ENCODE measurements at regions of chr19 and their contacts with region 1.

Region 1: GRCh38 chr19:49473868-49474544 is at the start of gene FLT3LG:
- DNase-seq: peak; percentile 89
- H3K4me3 Mint-ChIP-seq: peak within 1 kb of the TSS; percentile 88
- H3K27ac Mint-ChIP-seq: peak within 1 kb of the TSS; percentile 95
- H3K4me1 Mint-ChIP-seq: peaks cover 65% of the 10 kb centered on the region
- H3K27me3 Mint-ChIP-seq: no peaks in the 10 kb centered on the region
- total RNA-seq, gene FLT3LG: 23.9 to 28.4 TPM

Region 2: DNA sequence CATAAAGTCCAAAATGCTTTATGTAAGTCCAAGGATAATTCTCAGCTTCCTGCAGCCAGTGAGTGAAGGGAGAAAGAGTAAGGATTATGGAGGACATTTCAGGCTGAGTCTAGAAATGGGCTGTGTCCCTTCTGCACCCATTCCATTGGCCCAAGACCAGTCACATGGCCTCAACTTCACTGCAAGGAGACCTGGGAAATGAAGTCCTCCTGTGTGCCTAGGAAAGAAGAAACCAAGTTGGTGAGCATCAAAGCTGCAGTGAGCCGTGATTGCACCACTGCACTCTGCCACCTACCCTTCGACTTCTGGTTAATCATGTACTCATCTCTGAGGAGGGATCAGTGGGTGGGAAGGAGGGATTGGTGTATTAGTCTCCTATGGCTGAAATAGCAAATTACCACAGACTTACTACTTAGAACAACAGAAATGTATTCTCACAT is 142.4 kb before region 1 on chr19:
- CTCF ChIA-PET with region 1: interaction called, 4 read pairs
- intact Hi-C with region 1: loop called (anchors 2 kb)
- DNase-seq: peak; percentile 84
- H3K4me3 Mint-ChIP-seq: peak overlapping the region; percentile 44
- H3K27ac Mint-ChIP-seq: peak overlapping the region; percentile 81
- H3K4me1 Mint-ChIP-seq: peaks cover 74% of the 10 kb centered on the region
- H3K27me3 Mint-ChIP-seq: no peaks in the 10 kb centered on the region

Region 3: DNA sequence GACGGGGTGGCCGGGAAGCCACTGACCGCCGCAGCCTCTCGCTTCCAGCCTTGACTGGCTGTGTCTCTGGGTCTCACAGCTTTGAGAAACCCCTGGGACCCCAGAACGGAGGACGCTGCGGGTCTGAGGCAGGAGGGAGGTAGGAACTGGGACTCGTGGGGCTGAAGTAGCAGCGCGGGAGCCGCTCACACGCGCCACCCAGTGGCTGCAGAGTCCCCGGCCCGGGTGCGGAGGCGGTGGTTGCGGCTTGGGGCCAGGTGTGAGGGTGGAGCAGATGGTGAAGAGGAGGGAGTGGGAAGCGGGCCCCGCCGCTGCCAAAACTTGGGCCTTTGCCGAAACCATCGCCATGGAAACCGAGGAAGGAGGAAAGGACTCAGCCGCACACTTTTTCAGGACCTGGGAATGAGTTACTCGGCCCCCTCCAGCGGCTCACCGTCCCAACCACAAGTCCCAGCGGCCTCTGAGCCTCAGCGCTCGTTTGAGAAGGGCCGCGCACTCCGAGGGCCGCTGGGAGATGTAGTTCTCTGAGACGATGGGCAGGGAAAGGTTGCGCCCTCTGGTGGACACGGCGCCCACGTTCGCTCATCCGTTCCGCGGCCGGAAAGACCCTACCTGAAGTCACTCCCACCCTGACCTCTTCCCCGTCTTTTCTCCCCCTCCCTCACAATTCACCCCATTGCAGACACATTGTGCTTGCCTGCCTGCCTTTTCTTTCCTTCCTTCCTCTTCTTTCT is 30.5 kb before region 1 on chr19:
- CTCF ChIA-PET with region 1: interaction called, 6 read pairs
- intact Hi-C with region 1: loop called (anchors 1 kb)
- DNase-seq: peak; percentile 96
- H3K4me3 Mint-ChIP-seq: peak overlapping the region; percentile 75
- H3K27ac Mint-ChIP-seq: peak overlapping the region; percentile 72
- H3K4me1 Mint-ChIP-seq: peaks cover 23% of the 10 kb centered on the region
- H3K27me3 Mint-ChIP-seq: peaks cover 38% of the 10 kb centered on the region

Region 4: GRCh38 chr19:49487277-49488045 is 13.5 kb after region 1 on chr19 and contains the start of gene RPL13A:
- CTCF ChIA-PET with region 1: interaction called, 10 read pairs
- intact Hi-C with region 1: loop called (anchors 1 kb)
- DNase-seq: peak; percentile 100
- H3K4me3 Mint-ChIP-seq: peak within 1 kb of the TSS; percentile 99
- H3K27ac Mint-ChIP-seq: peak within 1 kb of the TSS; percentile 95
- H3K4me1 Mint-ChIP-seq: peaks cover 28% of the 10 kb centered on the region
- H3K27me3 Mint-ChIP-seq: no peaks in the 10 kb centered on the region
- total RNA-seq, gene RPL13A: 4,441 to 4,607 TPM

Region 5: DNA sequence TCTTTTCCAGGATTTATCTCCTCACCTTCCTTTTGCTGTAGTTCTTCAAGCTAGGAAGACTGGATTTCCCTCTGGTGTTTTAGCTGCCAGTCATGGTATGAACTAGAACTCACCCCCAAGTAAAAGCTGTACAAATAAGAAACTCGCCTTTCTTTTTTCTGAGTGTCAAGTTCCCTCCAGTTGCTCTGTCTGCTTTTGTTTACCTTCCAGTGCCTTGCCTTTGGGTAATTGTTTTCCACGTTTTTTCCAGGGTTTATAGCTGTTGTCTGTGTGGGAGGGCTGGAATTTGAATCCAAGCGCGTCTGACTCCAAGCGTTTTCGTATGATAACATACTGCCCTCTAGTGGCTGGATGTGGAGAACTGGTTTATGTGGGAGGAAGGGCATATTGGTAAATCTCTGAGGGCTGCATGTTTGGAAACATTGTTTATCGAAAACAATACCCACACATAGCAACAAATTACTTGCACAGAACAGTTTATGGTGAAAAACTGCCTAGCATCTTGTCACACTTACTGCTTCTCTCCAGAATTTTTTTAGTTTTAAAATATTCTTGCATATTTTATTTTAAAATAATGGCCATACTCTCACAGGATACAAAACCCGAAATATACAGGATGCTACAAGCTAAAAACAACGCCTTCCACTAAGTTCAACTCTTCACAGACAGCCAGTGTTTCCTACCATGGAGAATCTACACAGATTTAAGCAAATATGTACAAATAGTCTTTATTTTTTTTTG is 73.0 kb after region 1 on chr19:
- CTCF ChIA-PET with region 1: interaction called, 10 read pairs
- intact Hi-C with region 1: loop called (anchors 2 kb)
- DNase-seq: peak; percentile 82
- H3K4me3 Mint-ChIP-seq: peak overlapping the region; percentile 68
- H3K27ac Mint-ChIP-seq: no peak overlapping the region
- H3K4me1 Mint-ChIP-seq: peaks cover 44% of the 10 kb centered on the region
- H3K27me3 Mint-ChIP-seq: no peaks in the 10 kb centered on the region

Region 6: GRCh38 chr19:49758292-49758691 is 284.3 kb after region 1 on chr19:
- CTCF ChIA-PET with region 1: no interaction called
- intact Hi-C with region 1: no loop called
- DNase-seq: no peak
- H3K4me3 Mint-ChIP-seq: no peak overlapping the region
- H3K27ac Mint-ChIP-seq: no peak overlapping the region
- H3K4me1 Mint-ChIP-seq: no peaks in the 10 kb centered on the region
- H3K27me3 Mint-ChIP-seq: no peaks in the 10 kb centered on the region